ENCODE measurements at regions of chr13 and their contacts with region 1.

Region 1: GRCh38 chr13:51814825-51815650 is 11.1 kb upstream of the DHRS12 start:
- DNase-seq: peak; percentile 65 to 77
- ATAC-seq: peak; percentile 89

Region 2: GRCh38 chr13:51452361-51453206 is 362.5 kb before region 1 on chr13 and contains the start of gene INTS6:
- intact Hi-C with region 1: loop called in 1 of 2 experiments (anchors 10 kb)
- DNase-seq: peak; percentile 98 to 100
- ATAC-seq: peak; percentile 82
- total RNA-seq, gene INTS6: 32.1 to 35.4 TPM